Naive thymus-derived CD4-positive, alpha-beta T cell (primary cell): ENCODE measurements at regions of chr5 and their contacts with region 1.

Region 1: DNA sequence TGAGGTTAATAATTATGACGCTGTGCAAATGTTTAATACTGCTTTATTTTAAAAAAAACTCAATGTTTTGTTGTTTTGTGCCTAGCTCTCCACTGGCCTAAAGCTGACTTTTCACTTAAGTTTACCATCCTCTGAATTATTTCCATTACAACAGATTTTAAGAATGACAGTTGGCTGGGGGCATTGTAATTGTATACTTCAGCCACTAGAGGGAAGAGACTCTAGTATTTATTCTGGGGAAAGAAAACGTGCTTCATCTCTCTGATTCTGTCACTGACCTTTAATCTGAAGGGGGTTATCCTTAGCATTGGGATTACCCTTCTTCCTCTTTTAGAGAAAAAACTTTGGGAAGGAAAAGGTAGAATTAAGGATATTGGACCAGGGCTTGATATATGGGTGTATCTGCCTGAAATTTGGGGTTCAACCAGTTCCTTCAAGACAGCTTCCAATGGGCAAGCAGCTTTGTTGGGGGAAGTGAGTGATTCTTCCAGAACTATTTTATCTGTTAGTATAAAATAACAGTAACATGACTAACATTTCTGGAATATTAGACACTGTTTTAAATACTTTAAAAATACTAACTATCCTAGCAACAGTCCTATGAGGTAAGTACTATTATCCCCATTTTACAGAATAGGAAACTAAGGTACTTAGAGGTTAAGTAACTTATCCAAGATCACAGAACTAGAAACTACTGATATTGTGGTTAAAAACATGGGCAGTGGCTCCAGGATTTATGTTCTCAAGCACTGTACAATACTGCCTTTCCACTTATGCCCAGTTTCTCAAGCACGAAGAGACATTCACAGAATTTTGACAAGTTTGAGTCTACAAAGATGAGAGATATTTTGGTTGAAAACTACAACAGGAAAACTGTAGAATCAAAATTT is 208.4 kb downstream of the CD180 start:
- DNase-seq: peak in 6 of 9 donors; percentile 15 to 52 (median 40)
- ATAC-seq: peak; percentile 80
- H3K4me3 ChIP-seq: no peak overlapping the region
- H3K4me3 Mint-ChIP-seq: no peak overlapping the region
- H3K27ac ChIP-seq: no peak overlapping the region
- H3K27ac Mint-ChIP-seq: no peak overlapping the region
- H3K4me1 ChIP-seq: no peaks in the 10 kb centered on the region
- H3K4me1 Mint-ChIP-seq: peaks cover 0 to 17% (median 5%) of the 10 kb centered on the region in 7 donors
- H3K27me3 ChIP-seq: no peaks in the 10 kb centered on the region
- H3K27me3 Mint-ChIP-seq: peaks cover 0 to 11% (median 0%) of the 10 kb centered on the region in 5 donors

Region 2: GRCh38 chr5:66963559-66963971 is 24.6 kb before region 1 on chr5:
- CTCF ChIA-PET with region 1: no interaction called
- POLR2A ChIA-PET with region 1: no interaction called
- intact Hi-C with region 1: no loop called
- DNase-seq: no peak
- ATAC-seq: no peak
- H3K4me3 ChIP-seq: no peak overlapping the region
- H3K4me3 Mint-ChIP-seq: no peak overlapping the region
- H3K27ac ChIP-seq: no peak overlapping the region
- H3K27ac Mint-ChIP-seq: no peak overlapping the region
- H3K4me1 ChIP-seq: no peaks in the 10 kb centered on the region
- H3K4me1 Mint-ChIP-seq: no peaks in the 10 kb centered on the region
- H3K27me3 ChIP-seq: no peaks in the 10 kb centered on the region
- H3K27me3 Mint-ChIP-seq: peaks cover 0 to 8% (median 0%) of the 10 kb centered on the region in 5 donors

Region 3: GRCh38 chr5:67050136-67050535 is 61.9 kb after region 1 on chr5:
- CTCF ChIA-PET with region 1: no interaction called
- POLR2A ChIA-PET with region 1: no interaction called
- intact Hi-C with region 1: loop called in 1 of 2 experiments (anchors 5 kb)
- DNase-seq: no peak
- ATAC-seq: no peak
- H3K4me3 ChIP-seq: no peak overlapping the region
- H3K4me3 Mint-ChIP-seq: peak overlapping the region in 1 of 10 donors; percentile 11
- H3K27ac ChIP-seq: no peak overlapping the region
- H3K27ac Mint-ChIP-seq: peak overlapping the region in 2 of 9 donors; percentile 8 to 10
- H3K4me1 ChIP-seq: peaks cover 0 to 3% of the 10 kb centered on the region in 2 donors
- H3K4me1 Mint-ChIP-seq: peaks cover 9 to 27% (median 18%) of the 10 kb centered on the region in 7 donors
- H3K27me3 ChIP-seq: no peaks in the 10 kb centered on the region
- H3K27me3 Mint-ChIP-seq: no peaks in the 10 kb centered on the region

Region 4: DNA sequence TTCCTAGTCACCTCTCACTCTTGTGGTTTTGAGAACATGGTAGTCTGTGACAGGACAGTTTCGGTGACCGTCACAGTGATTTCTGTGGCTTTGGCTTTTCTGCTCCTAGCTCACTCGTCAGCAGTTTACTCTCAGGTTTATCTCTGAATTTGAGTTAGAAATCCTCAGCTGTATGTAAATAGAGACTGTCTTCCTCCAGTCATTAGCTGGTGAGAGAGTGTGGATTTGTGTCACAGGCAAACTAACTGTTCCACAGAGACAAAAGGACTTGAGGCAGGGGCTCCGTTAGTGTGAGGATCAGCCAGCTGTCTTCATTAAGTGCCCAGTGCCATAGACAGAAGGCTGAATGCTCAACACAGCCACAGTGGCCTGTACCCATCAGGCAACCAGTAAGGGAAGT is 77.0 kb after region 1 on chr5:
- CTCF ChIA-PET with region 1: no interaction called
- POLR2A ChIA-PET with region 1: no interaction called
- intact Hi-C with region 1: loop called in 1 of 2 experiments (anchors 5 kb)
- DNase-seq: no peak
- ATAC-seq: no peak
- H3K4me3 ChIP-seq: no peak overlapping the region
- H3K4me3 Mint-ChIP-seq: no peak overlapping the region
- H3K27ac ChIP-seq: no peak overlapping the region
- H3K27ac Mint-ChIP-seq: peak overlapping the region in 2 of 9 donors; percentile 61 to 77
- H3K4me1 ChIP-seq: peaks cover 0 to 3% of the 10 kb centered on the region in 2 donors
- H3K4me1 Mint-ChIP-seq: peaks cover 14 to 39% (median 25%) of the 10 kb centered on the region in 7 donors
- H3K27me3 ChIP-seq: no peaks in the 10 kb centered on the region
- H3K27me3 Mint-ChIP-seq: no peaks in the 10 kb centered on the region

Region 5: DNA sequence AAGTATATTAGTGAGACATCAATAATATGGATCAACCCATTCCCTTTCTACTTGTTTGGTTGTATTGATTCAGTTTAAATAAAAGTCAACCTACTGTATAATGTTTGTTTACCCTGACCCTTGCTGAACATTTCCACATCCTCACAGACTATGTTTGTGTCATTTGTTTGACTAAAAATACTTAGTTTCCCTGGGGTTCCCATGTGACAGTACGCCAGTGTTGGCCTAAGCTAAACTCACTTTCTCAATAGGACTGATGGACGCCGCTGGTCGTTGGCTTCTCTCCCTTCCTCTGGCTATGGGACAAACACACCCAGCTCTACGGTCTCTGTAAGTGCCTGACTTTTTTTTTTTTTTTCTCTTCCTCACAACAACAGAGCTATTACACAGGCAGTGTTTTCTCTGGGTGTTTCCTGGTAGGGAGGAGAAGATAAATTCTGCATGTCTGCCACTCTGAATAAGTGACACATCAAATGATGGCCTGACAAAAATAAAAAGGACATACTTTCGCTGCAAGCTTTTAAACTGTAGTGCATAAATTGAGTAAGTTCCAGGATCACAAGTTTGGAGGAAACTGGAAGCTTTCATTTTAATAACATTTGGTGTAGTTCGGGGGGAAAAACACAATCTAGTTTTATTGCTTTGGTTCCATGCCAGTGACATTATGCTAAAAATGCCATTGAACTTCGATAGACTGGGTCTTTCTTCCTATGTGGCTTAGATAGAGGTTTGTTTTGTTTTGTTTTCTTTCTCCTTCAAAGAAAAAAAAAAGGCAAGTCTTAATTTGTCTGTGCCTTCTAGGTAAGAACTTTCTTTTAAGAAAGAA is 107.4 kb after region 1 on chr5:
- CTCF ChIA-PET with region 1: no interaction called
- POLR2A ChIA-PET with region 1: no interaction called
- intact Hi-C with region 1: loop called in 1 of 2 experiments (anchors 5 kb)
- DNase-seq: no peak
- ATAC-seq: no peak
- H3K4me3 ChIP-seq: no peak overlapping the region
- H3K4me3 Mint-ChIP-seq: no peak overlapping the region
- H3K27ac ChIP-seq: no peak overlapping the region
- H3K27ac Mint-ChIP-seq: no peak overlapping the region
- H3K4me1 ChIP-seq: no peaks in the 10 kb centered on the region
- H3K4me1 Mint-ChIP-seq: peaks cover 0 to 12% (median 4%) of the 10 kb centered on the region in 7 donors
- H3K27me3 ChIP-seq: no peaks in the 10 kb centered on the region
- H3K27me3 Mint-ChIP-seq: no peaks in the 10 kb centered on the region

Region 6: DNA sequence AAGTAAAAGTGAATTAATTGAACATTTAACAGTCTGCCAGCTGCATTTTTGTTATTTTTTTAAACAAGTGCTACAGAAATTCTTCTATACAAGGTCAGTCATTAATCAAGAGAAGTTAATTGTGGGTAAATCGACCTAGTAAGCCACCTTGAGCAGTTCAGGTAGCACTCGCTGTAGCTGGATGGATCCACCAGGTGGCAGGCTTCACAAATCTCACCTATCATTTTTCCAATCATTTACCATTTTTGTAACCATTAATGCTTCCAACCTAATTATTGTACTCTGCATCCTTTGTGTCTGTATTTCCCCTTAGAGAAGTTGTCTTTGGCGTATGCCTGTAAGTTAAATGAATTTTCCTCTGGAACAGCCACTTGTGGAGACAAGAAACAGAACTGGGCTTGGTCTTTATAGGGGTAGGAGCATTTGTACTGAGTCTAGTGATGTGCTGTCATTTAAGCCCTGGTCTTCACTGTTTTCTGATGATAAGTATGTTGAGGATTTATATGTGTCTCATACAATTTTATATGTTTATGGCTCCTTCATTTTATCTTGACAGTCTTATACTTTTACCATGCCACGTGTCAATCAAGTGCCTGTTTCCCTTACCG is 168.9 kb after region 1 on chr5:
- CTCF ChIA-PET with region 1: interaction called, 4 read pairs
- POLR2A ChIA-PET with region 1: interaction called, 3 read pairs
- intact Hi-C with region 1: loop called in 1 of 2 experiments (anchors 2 kb)
- DNase-seq: peak in 7 of 9 donors; percentile 28 to 64 (median 52)
- ATAC-seq: peak; percentile 75
- H3K4me3 ChIP-seq: no peak overlapping the region
- H3K4me3 Mint-ChIP-seq: peak overlapping the region in 4 of 10 donors; percentile 2 to 53 (median 48)
- H3K27ac ChIP-seq: no peak overlapping the region
- H3K27ac Mint-ChIP-seq: peak overlapping the region in 8 of 9 donors; percentile 49 to 100 (median 74)
- H3K4me1 ChIP-seq: peaks cover 41 to 42% of the 10 kb centered on the region in 2 donors
- H3K4me1 Mint-ChIP-seq: peaks cover 25 to 61% (median 55%) of the 10 kb centered on the region in 7 donors
- H3K27me3 ChIP-seq: no peaks in the 10 kb centered on the region
- H3K27me3 Mint-ChIP-seq: no peaks in the 10 kb centered on the region